ENCODE measurements at regions of chr5 and their contacts with region 1.

Region 1: DNA sequence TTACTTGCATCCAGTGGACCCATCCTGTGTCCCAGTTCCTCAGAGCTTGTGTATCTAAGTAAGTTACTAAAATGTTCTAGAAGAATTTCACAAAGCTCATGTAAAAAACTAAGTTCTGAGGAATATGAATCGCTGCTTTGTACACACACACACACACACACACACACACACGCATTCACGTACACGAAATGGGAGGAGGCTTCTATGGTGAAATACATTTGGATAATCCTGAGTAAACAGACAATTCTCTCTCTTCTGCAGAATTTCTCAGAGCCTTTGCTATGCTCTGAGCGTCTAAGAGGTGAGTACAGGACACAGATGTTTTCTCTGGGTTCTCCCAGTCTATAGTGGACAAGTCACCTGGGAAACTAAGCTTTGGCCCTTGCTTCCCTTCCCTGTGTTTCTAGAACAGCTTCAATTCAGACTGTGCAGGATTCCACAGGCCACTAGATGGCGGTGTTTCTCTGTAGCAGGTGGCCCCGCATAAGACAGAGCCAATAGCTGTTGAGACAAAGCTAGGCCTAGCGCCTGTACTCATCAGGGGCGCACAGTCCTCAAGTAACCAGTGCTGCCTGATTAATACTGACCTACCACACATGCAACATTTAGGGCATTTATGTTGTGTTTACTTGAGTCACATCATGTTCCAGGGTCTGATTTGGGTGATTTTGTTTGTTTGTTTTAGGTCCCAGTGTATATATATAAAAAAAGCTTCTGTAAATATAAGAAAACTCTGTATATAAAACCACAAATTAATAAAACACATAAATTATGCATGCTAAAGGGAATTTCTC is 114.8 kb downstream of the LIFR start:
- DNase-seq: peak; percentile 82 to 97 (median 90)
- H3K4me3 ChIP-seq: no peak overlapping the region
- H3K27ac ChIP-seq: peak overlapping the region in 1 of 59 donors; percentile 48
- H3K27me3 ChIP-seq: peaks cover 0 to 7% (median 0%) of the 10 kb centered on the region in 45 donors
- CTCF ChIP-seq: peak; percentile 60 to 100 (median 97)

Region 2: GRCh38 chr5:38497946-38498345 is 56.3 kb after region 1 on chr5:
- intact Hi-C with region 1: loop called in 1 of 2 experiments (anchors 10 kb)
- DNase-seq: no peak
- H3K4me3 ChIP-seq: no peak overlapping the region
- H3K27ac ChIP-seq: peak overlapping the region in 1 of 59 donors; percentile 7
- H3K27me3 ChIP-seq: no peaks in the 10 kb centered on the region
- CTCF ChIP-seq: peak in 43 of 56 donors; percentile 14 to 65 (median 34)

Region 3: GRCh38 chr5:38672059-38672788 is 230.6 kb after region 1 on chr5:
- intact Hi-C with region 1: loop called in 1 of 2 experiments (anchors 5 kb)
- DNase-seq: no peak
- H3K4me3 ChIP-seq: no peak overlapping the region
- H3K27ac ChIP-seq: peak overlapping the region in 10 of 59 donors; percentile 3 to 76 (median 27)
- H3K27me3 ChIP-seq: no peaks in the 10 kb centered on the region
- CTCF ChIP-seq: no peak

Region 4: DNA sequence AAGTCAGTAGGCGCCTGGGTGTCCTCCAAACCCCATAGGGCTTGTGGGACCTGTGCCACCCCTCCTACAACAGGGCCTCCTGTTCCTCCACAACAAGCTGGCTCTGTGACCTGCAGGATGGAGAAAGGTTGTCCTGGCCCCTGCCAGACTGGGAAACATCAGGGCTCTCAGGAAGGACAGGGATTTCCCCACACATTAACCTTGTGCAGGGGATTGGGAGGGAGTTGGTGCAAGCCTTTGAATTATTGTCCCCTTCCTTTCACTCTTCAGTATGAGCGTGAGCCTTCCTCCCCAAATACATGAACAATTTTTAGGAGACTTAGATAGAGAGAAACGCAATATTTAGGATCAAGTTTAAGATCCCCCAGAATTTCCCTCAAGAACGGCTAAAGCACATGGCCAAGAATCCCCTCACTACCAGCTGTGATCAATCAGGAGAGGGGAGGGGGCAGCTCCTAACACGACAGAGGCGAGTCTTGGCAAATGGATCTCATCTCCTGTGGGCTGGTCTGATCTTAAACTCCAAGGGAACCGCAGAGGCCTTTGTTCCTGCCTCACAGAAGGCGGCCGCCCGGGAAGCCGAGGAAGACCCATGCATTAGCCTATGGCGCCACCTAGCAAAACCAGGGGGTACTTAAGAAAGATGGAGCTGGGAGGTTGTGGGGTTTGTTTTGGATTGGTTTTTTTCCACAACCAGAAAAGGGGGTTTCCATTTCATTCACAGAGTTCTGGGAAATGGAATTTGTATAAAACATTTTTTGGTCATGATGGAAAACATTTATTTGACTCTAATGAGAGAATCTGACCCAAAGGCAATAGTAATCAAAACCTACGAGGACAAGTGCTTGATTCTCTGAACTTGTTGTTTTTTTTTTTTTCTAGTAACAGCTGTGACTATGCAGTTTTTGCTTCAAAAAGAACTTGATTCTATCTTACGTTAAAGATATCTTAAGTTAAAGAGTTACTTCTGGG is 368.0 kb after region 1 on chr5:
- intact Hi-C with region 1: loop called (anchors 1 to 2 kb)
- DNase-seq: peak; percentile 68 to 89 (median 82)
- H3K4me3 ChIP-seq: peak overlapping the region in 1 of 59 donors; percentile 9
- H3K27ac ChIP-seq: peak overlapping the region in 11 of 59 donors; percentile 3 to 66 (median 35)
- H3K27me3 ChIP-seq: peaks cover 0 to 5% (median 0%) of the 10 kb centered on the region in 45 donors
- CTCF ChIP-seq: peak; percentile 66 to 97 (median 90)

Region 5: DNA sequence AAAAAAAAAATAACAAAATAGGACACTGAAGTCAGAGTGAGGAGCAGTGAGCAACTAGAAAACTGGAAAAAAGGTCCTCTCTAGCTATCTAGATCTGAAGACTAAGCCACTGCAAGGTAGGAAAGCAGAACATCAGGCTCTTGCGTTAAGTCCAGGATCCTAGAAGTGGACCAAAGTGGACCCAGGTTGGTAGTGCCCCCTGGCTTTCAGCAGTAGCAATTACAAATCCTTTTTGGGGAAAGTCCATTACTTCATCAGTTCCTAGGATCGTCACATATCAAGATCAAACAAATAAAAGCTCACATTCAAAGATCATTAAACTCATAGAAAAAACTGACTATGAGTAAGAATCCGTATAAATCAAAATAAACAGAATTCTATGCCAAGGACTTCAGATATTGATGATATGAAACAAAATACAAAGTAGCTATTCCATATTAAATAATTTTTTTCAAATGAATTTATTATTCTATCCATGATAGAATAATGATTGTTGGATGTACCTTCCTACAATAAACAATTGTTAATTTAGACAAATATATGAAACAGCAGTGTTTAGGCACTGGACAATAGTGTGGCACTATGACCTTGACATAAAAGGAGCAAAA is 639.1 kb after region 1 on chr5:
- intact Hi-C with region 1: loop called in 1 of 2 experiments (anchors 5 kb)
- DNase-seq: peak in 4 of 10 donors; percentile 28 to 48 (median 38)
- H3K4me3 ChIP-seq: peak overlapping the region in 13 of 59 donors; percentile 2 to 31 (median 14)
- H3K27ac ChIP-seq: peak overlapping the region in 18 of 59 donors; percentile 15 to 100 (median 99)
- H3K27me3 ChIP-seq: no peaks in the 10 kb centered on the region
- CTCF ChIP-seq: peak; percentile 73 to 94 (median 84)